Gastrocnemius medialis (tissue), 4 donors: ENCODE measurements at regions of chr3 and their contacts with region 1.

Region 1: DNA sequence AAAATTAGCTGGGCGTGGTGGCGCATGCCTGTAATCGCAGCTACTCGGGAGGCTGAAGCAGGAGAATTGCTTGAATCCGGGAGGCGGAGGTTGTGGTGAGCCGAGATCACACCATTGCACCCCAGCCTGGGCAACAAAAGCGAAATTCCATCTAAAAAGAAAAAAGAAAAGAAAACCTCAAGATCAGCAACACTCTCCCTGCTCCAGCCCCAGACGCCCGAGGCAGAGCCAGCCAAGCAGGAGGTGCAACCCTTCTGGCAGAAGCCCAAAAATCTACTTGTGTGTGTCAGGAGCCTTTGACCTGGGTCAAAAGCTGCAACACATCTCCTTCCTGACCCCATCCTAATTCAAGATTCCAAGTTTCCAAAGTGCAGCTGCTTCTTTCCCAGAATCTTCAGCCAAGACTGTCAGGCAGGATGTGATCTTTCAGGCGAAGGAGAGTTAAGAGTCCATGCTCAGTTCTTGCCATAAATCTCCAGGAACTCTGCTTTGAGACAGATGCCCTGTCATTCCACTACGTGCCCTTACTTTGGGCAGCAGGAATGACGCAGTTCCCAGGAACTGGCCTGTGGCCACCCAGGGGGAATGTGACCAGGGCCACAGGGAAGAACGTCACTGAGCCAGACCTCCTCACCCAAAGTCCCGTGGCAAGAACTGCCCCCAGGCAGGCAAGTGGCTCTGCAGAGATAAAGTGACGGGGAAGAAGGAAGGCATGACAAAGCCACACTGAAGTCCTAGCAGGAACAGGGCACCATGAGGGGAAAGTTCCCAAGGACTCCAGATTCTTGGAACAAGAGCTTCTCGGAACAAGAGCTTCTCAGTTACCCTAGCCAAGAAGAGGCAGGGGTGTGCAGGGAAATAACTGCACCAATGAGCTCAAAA is 39.5 kb downstream of the SH3BP5 start:
- DNase-seq: peak; percentile 36 to 90
- ATAC-seq: peak; percentile 28 to 80
- H3K4me3 ChIP-seq: no peak overlapping the region
- H3K27ac ChIP-seq: peak overlapping the region; percentile 77 to 89 (median 82)
- H3K4me1 ChIP-seq: peaks cover 46 to 49% of the 10 kb centered on the region in 2 donors
- H3K27me3 ChIP-seq: no peaks in the 10 kb centered on the region
- CTCF ChIP-seq: no peak
- POLR2A ChIP-seq: peak; percentile 49 to 52

Region 2: GRCh38 chr3:15315003-15315402 is 22.1 kb after region 1 on chr3:
- in situ Hi-C with region 1: no loop called
- intact Hi-C with region 1: loop called (anchors 1 kb)
- DNase-seq: peak; percentile 66 to 86
- ATAC-seq: peak; percentile 81 to 85
- H3K4me3 ChIP-seq: no peak overlapping the region
- H3K27ac ChIP-seq: peak overlapping the region; percentile 88 to 93 (median 91)
- H3K4me1 ChIP-seq: peaks cover 81 to 85% of the 10 kb centered on the region in 2 donors
- H3K27me3 ChIP-seq: no peaks in the 10 kb centered on the region
- CTCF ChIP-seq: no peak
- POLR2A ChIP-seq: peak in 1 of 2 donors; percentile 36